CD8-positive, alpha-beta T cell (primary cell): ENCODE measurements at regions of chr12 and their contacts with region 1.

Region 1: GRCh38 chr12:27710592-27711316 is at the start of gene MRPS35:
- DNase-seq: peak; percentile 83 to 95 (median 90)
- ATAC-seq: peak; percentile 96
- H3K4me3 ChIP-seq: peak within 1 kb of the TSS; percentile 86 to 89
- H3K4me3 Mint-ChIP-seq: peak within 1 kb of the TSS; percentile 96
- H3K27ac ChIP-seq: peak within 1 kb of the TSS; percentile 68 to 71
- H3K27ac Mint-ChIP-seq: peak within 1 kb of the TSS; percentile 95
- H3K4me1 ChIP-seq: peaks cover 11% of the 10 kb centered on the region
- H3K4me1 Mint-ChIP-seq: peaks cover 36% of the 10 kb centered on the region
- H3K27me3 ChIP-seq: no peaks in the 10 kb centered on the region
- H3K27me3 Mint-ChIP-seq: peaks cover 6% of the 10 kb centered on the region
- CTCF ChIP-seq: no peak
- total RNA-seq, gene MRPS35: 30.0 to 30.8 TPM

Region 2: DNA sequence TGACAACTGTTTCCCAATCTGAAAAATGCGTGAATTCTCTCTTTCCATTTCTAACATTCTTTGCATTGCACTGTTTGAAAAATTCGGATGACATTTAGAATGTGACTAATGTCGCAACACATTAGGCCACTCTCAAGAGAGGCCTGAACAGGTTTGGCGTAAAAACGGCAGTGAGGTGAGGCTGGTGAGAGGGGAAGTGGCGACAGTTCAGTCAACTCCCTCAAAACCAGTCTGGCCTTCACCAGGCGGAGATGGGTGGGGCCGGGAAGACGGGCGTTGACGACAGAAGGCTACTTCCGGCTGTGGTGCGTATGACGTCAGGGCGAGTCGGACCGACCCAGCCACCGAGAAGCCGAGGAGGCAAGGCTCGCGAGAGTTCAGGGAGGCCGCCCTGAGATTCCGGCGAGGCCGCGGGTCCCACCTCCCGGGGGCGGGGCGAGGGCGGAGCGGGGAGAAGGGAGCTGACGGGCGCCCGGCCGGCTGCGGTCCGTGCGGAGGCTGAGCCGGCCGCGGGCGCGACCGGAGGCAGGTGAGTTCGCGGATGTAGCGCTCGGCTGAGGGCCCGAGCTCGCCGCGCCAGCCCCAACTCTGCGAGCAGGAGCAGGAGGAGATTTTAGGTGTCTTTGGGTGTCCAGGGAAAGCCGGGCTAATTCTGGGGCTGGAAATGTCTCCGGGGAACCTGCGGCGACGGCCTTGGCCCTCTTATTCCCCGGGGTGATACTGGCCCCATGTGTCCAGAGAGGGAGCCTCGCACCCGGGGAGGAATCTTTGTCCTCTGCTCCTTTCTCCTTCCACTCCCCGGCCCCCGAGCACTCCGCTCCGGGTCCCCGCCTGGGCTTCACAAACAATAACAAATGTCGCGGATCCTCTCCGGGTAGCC is 466.7 kb before region 1 on chr12 and contains the start of gene STK38L:
- CTCF ChIA-PET with region 1: no interaction called
- POLR2A ChIA-PET with region 1: no interaction called
- intact Hi-C with region 1: loop called in 1 of 2 experiments (anchors 2 kb)
- DNase-seq: peak; percentile 90 to 99 (median 98)
- ATAC-seq: peak; percentile 95
- H3K4me3 ChIP-seq: peak within 1 kb of the TSS; percentile 84 to 89
- H3K4me3 Mint-ChIP-seq: peak within 1 kb of the TSS; percentile 96
- H3K27ac ChIP-seq: peak within 1 kb of the TSS; percentile 76
- H3K27ac Mint-ChIP-seq: peak within 1 kb of the TSS; percentile 96
- H3K4me1 ChIP-seq: peaks cover 14% of the 10 kb centered on the region
- H3K4me1 Mint-ChIP-seq: peaks cover 52% of the 10 kb centered on the region
- H3K27me3 ChIP-seq: no peaks in the 10 kb centered on the region
- H3K27me3 Mint-ChIP-seq: no peaks in the 10 kb centered on the region
- CTCF ChIP-seq: no peak
- total RNA-seq, gene STK38L: 27.0 to 28.6 TPM

Region 3: DNA sequence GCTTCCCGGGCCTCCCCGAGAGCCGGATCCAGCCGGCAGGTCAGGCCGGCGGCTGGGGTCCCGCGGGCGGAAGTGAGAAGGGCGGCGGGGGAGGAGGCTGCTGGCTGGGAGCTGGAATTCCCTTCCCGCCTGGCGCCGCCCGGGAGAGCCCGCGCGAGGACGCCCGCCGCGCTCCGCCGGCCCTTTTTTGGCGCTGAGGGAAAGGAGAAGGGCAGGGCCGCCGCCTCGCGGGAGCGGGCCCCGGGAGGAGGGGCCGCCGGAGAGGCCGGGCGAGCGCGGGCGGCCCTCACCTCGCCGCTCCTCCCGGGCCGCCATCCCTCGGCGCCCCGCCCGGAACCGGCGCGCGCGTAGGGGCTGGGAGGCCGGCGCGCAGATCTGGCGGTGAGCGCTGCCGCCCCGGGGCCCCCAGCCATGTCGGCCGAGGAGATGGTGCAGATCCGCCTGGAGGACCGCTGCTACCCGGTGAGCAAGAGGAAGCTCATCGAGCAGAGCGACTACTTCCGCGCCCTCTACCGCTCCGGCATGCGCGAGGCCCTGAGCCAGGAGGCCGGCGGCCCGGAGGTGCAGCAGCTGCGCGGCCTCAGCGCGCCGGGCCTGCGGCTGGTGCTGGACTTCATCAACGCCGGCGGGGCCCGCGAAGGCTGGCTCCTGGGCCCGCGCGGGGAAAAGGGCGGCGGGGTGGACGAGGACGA is 69.3 kb after region 1 on chr12 and contains the starts of genes KLHL42 and MANSC4:
- CTCF ChIA-PET with region 1: interaction called, 3 read pairs
- POLR2A ChIA-PET with region 1: interaction called, 3 read pairs
- intact Hi-C with region 1: loop called (anchors 2 kb)
- DNase-seq: peak; percentile 27 to 81 (median 68)
- ATAC-seq: peak; percentile 84
- H3K4me3 ChIP-seq: peak within 1 kb of the TSS; percentile 69 to 73
- H3K4me3 Mint-ChIP-seq: peak within 1 kb of the TSS; percentile 88
- H3K27ac ChIP-seq: peak within 1 kb of the TSS; percentile 46 to 53
- H3K27ac Mint-ChIP-seq: peak within 1 kb of the TSS; percentile 91
- H3K4me1 ChIP-seq: peaks cover 15% of the 10 kb centered on the region
- H3K4me1 Mint-ChIP-seq: peaks cover 42% of the 10 kb centered on the region
- H3K27me3 ChIP-seq: no peaks in the 10 kb centered on the region
- H3K27me3 Mint-ChIP-seq: no peaks in the 10 kb centered on the region
- CTCF ChIP-seq: no peak
- total RNA-seq, gene KLHL42: 11.0 to 11.1 TPM
- total RNA-seq, gene MANSC4: not detected